ENCODE measurements at regions of chr2 and their contacts with region 1.

Region 1: GRCh38 chr2:101205521-101205998 is 47.1 kb upstream of the CNOT11 start:
- DNase-seq: peak; percentile 63
- H3K4me3 ChIP-seq: peak overlapping the region; percentile 7; the same call in 1 of the 2 replicates
- H3K27ac ChIP-seq: no peak overlapping the region
- H3K27me3 ChIP-seq: no peaks in the 10 kb centered on the region
- CTCF ChIP-seq: peak; percentile 73

Region 2: DNA sequence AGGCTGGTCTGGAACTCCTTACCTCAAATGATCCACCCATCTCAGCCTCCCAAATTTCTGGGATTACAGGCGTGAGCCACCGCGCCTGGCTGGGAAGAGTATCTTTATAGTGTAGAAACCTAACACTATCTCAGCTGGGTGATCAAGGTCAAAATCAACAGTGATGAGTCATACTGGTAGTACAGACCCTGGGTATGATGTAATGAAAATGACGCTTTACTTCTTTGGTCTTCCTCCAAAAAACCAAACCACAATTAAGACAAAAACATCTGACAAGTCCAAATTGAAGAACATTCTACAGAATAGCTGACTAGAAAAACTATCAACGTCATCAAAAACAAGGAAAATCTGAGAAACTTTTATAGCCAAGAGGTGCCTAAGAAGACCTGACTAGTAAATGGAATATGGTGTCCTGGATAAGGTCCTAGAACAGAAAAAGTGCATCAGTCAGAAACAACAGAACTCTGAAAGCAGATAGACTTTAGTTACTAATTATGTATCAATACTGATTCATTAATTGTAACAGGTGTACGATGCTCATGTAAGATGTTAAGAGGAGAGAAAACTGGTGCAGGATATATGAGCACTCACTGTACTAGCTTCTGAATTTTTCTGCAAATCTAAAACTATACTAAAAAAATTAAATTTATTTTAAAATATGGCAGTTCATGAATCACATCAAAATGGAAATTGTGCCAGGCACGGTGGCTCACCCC is 617.3 kb before region 1 on chr2:
- CTCF ChIA-PET with region 1: interaction called, 11 read pairs
- POLR2A ChIA-PET with region 1: no interaction called
- DNase-seq: no peak
- H3K4me3 ChIP-seq: no peak overlapping the region
- H3K27ac ChIP-seq: no peak overlapping the region
- H3K27me3 ChIP-seq: no peaks in the 10 kb centered on the region
- CTCF ChIP-seq: no peak

Region 3: GRCh38 chr2:100924520-100925451 is 280.8 kb before region 1 on chr2:
- CTCF ChIA-PET with region 1: no interaction called
- POLR2A ChIA-PET with region 1: no interaction called
- DNase-seq: peak; percentile 34
- H3K4me3 ChIP-seq: peak overlapping the region; percentile 51
- H3K27ac ChIP-seq: peak overlapping the region; percentile 73
- H3K27me3 ChIP-seq: no peaks in the 10 kb centered on the region
- CTCF ChIP-seq: no peak

Region 4: GRCh38 chr2:101012706-101013181 is 192.8 kb before region 1 on chr2:
- CTCF ChIA-PET with region 1: interaction called, 68 read pairs
- POLR2A ChIA-PET with region 1: interaction called, 3 read pairs
- DNase-seq: no peak
- H3K4me3 ChIP-seq: no peak overlapping the region
- H3K27ac ChIP-seq: no peak overlapping the region
- H3K27me3 ChIP-seq: no peaks in the 10 kb centered on the region
- CTCF ChIP-seq: peak; percentile 83

Region 5: DNA sequence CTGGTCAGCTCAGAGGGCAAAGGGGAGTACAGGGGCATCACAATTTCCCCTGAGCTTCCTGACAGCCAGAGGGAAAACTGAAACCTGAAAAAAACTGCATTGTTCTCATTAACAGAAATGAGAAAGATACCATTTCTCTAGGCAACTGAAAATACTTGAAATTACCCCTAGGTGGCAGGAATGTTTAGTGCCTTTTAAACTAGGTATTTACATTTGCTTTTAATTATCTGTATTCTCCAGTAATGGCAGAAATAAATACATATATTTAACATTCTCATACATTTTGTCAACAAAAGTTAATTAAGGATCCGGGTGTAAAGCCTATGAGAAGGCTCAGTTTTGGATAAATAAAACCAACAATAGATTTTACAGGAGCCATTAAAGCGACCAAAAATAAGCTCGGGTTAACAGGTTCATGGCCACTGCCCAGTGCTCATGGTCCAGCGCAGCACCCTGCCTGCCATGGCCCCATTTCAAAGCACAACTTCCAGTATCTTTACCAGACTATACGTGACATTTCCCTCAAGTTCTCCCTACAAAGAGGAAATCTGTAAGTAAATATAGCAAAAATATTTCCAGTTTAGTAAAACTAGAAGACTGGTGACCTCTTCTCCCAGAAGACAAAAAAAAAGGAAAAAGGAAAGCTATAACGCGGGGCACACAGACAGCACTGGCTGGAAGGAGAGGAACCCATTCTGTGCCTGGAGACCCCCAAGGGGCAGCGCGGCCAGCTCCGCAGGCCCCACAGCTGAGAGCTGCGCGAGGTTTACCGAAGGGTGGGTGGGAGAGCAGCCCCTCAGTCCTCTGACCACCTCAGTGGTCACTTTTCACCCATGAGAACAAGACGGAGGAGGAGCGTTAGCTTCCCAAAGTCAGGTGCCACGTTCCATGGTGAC is 168.8 kb before region 1 on chr2:
- CTCF ChIA-PET with region 1: interaction called, 171 read pairs
- POLR2A ChIA-PET with region 1: no interaction called
- DNase-seq: no peak
- H3K4me3 ChIP-seq: no peak overlapping the region
- H3K27ac ChIP-seq: no peak overlapping the region
- H3K27me3 ChIP-seq: no peaks in the 10 kb centered on the region
- CTCF ChIP-seq: peak; percentile 68

Region 6: DNA sequence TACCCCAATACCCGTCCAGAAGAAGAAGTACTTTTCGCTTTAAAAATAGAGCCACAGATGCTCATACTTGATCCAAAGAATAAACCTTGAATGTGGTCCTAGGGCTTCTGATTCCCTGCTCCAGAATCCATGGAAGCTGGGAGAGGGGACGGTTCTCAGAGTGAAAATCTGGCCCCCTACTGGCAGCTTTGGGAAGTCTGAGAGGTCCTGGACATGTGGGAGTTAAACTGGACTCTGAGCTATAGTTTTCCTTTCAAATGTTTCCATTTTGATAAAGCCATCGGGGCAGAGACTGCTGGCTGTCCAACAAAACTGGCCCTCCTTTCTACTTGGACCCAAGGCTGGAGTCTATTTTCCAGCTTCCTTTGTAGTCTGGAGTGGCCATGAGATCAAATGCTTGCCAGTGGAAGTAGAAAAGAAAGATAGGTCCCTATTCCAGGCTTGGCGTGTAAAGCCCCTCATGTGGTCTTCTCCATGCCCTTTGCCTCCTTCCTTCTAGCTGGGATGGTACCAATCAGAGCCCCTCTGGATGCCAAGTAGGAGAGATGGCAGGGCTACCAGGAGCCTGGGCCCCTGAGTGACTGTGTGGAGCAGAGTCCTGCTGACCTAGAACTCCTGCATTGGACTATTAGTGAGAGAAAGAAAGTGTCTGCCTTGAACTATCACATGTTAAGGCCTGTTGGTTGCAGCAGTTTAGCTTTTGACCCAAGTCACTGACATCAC is 16.7 kb before region 1 on chr2:
- CTCF ChIA-PET with region 1: interaction called, 79 read pairs
- POLR2A ChIA-PET with region 1: no interaction called
- DNase-seq: no peak
- H3K4me3 ChIP-seq: no peak overlapping the region
- H3K27ac ChIP-seq: no peak overlapping the region
- H3K27me3 ChIP-seq: peaks cover 26% of the 10 kb centered on the region
- CTCF ChIP-seq: peak; percentile 86

Region 7: GRCh38 chr2:101341901-101342624 is 136.5 kb after region 1 on chr2:
- CTCF ChIA-PET with region 1: no interaction called
- POLR2A ChIA-PET with region 1: no interaction called
- DNase-seq: peak; percentile 29
- H3K4me3 ChIP-seq: no peak overlapping the region
- H3K27ac ChIP-seq: no peak overlapping the region
- H3K27me3 ChIP-seq: no peaks in the 10 kb centered on the region
- CTCF ChIP-seq: peak; percentile 87

Region 8: DNA sequence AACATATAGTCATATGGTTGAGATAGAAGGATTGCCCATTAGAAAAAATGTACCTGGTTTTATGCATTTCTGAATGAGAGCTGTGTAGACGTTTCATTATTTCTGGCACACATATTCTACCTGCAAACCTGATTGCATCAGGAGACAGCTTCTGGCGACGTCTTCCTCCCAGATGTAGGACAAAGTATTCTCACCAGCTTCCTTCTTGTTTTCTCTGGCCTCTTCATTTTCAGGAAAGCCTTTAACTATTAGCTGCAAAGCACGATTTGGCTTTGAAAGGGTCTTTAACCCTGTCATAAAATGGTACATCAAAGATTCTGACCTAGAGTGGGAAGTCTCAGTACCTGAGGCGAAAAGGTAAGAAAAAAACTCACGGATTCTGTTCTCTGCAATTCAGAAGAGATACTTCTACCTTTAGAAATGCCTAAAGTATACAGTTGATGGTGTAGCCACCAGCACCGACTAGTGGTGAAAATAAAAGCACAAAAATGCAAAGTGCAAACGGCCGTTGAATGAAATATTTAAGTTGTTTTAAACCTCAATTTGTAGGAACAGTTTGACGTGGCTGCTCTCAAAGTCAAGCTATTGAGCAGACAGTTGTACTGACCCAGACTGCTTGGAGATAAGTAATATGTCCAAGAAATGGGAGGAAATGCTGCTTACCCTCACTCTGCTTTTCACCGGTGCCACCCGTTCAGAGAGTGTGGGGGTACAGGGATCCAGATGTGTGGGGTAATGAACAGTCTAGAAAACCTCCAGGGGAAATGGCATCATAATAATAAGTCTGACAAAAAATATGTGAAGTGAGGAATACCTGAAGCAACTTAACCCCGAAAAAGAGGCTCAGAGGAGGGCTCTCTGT is 1237.6 kb after region 1 on chr2:
- CTCF ChIA-PET with region 1: interaction called, 11 read pairs
- POLR2A ChIA-PET with region 1: no interaction called
- DNase-seq: no peak
- H3K4me3 ChIP-seq: no peak overlapping the region
- H3K27ac ChIP-seq: no peak overlapping the region
- H3K27me3 ChIP-seq: no peaks in the 10 kb centered on the region
- CTCF ChIP-seq: peak; percentile 87